Gastrocnemius medialis (tissue), 4 donors: ENCODE measurements at regions of chr22 and their contacts with region 1.

Region 1: DNA sequence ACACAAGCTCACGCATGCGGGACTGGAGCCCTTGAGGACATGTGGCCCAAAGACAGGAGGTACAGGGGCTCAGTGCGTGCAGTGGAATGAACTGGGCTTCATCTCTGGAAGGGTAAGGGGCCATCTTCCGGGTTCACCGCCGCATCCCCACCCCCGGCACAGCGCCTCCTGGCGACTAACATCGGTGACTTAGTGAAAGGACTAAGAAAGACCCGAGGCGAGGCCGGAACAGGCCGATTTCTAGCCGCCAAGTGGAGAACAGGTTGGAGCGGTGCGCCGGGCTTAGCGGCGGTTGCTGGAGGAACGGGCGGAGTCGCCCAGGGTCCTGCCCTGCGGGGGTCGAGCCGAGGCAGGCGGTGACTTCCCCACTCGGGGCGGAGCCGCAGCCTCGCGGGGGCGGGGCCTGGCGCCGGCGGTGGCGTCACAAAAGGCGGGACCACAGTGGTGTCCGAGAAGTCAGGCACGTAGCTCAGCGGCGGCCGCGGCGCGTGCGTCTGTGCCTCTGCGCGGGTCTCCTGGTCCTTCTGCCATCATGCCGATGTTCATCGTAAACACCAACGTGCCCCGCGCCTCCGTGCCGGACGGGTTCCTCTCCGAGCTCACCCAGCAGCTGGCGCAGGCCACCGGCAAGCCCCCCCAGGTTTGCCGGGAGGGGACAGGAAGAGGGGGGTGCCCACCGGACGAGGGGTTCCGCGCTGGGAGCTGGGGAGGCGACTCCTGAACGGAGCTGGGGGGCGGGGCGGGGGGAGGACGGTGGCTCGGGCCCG is at the start of gene MIF:
- DNase-seq: peak; percentile 78 to 89
- ATAC-seq: peak; percentile 90 to 91
- H3K4me3 ChIP-seq: peak within 1 kb of the TSS; percentile 67 to 94 (median 78)
- H3K27ac ChIP-seq: peak within 1 kb of the TSS; percentile 83 to 95 (median 88)
- H3K4me1 ChIP-seq: peaks cover 12 to 19% of the 10 kb centered on the region in 2 donors
- H3K27me3 ChIP-seq: no peaks in the 10 kb centered on the region
- CTCF ChIP-seq: peak; percentile 65 to 86 (median 76)
- POLR2A ChIP-seq: peak; percentile 88 to 89
- total RNA-seq, gene MIF: 78.1 to 145 (median 129) TPM

Region 2: GRCh38 chr22:23857606-23858483 is 36.3 kb before region 1 on chr22 and contains the start of gene SLC2A11:
- in situ Hi-C with region 1: no loop called
- intact Hi-C with region 1: loop called (anchors 5 kb)
- DNase-seq: peak; percentile 94 to 97
- ATAC-seq: peak; percentile 94 to 95
- H3K4me3 ChIP-seq: peak within 1 kb of the TSS; percentile 77 to 88 (median 86)
- H3K27ac ChIP-seq: peak within 1 kb of the TSS; percentile 94 to 99 (median 98)
- H3K4me1 ChIP-seq: peaks cover 18 to 23% of the 10 kb centered on the region in 2 donors
- H3K27me3 ChIP-seq: no peaks in the 10 kb centered on the region
- CTCF ChIP-seq: peak in 2 of 5 experiments; percentile 23 to 33
- POLR2A ChIP-seq: peak; percentile 70 to 87
- total RNA-seq, gene SLC2A11: 2.4 to 19.0 (median 6.2) TPM

Region 3: DNA sequence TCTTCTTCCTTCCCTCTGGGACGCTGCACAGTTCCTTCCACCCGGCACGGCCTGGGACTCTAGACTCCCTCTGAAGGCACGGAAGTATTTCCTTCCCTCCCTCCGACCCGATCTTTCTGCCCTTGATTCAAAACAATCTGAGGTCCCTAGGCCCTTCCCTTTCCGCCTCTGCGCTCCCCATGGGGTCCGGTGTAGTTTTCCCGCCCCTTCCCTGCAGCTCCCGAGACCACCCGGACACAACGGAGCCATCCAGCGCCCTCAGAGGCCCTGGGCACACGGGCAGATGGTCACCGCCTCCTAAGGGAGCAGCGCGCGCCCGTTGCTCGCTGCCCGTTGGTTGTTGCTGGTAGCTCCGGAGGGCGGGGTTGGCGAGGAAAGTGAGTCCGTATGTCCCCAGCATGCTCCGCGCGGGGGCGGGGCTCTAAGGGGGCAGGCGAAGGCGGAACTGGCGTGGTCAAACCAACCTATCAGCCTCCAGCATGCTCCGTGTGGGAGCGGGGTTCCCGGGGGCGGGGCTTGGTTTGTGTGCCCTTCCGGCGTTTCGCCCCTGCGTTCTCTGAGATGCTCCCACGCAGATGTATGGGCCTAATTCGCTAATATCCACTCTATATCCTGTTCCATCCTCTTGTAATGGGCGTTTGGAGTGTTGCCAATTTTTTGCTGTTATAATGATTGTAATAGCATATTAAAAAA is 19.7 kb after region 1 on chr22:
- in situ Hi-C with region 1: no loop called
- intact Hi-C with region 1: loop called (anchors 2 kb)
- DNase-seq: peak; percentile 98 to 100
- ATAC-seq: peak; percentile 98
- H3K4me3 ChIP-seq: peak overlapping the region; percentile 63 to 68 (median 66)
- H3K27ac ChIP-seq: peak overlapping the region; percentile 85 to 90 (median 88)
- H3K4me1 ChIP-seq: peaks cover 4 to 5% of the 10 kb centered on the region in 2 donors
- H3K27me3 ChIP-seq: no peaks in the 10 kb centered on the region
- CTCF ChIP-seq: no peak
- POLR2A ChIP-seq: peak; percentile 74 to 78

Region 4: DNA sequence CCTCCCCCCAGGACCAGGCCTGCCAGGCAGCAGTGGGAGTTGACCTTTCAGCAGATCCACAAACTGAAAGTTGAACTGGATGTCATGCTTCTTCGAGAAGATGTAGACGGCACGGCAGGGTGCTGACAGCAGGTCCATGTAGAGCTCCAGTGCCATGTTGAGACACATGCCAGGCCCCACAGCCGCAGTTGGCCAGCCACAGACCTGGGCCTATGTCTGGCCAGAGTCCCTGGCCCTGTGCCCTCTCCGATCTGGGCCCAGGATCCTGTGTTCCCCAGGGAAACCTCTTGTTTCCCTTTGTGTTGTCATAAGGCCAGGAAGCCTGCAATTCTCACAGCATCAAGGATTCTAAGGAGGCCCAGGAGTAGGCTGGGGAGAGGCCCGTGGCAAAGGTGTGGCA is 111.1 kb after region 1 on chr22 and contains the start of gene GSTT4:
- in situ Hi-C with region 1: no loop called
- intact Hi-C with region 1: no loop called
- DNase-seq: no peak
- ATAC-seq: no peak
- H3K4me3 ChIP-seq: no peak within 1 kb of the TSS
- H3K27ac ChIP-seq: peak within 1 kb of the TSS in 2 of 4 donors; percentile 5 to 31
- H3K4me1 ChIP-seq: peaks cover 0 to 4% of the 10 kb centered on the region in 2 donors
- H3K27me3 ChIP-seq: no peaks in the 10 kb centered on the region
- CTCF ChIP-seq: no peak
- POLR2A ChIP-seq: no peak
- total RNA-seq, gene GSTT4: not detected

Region 5: DNA sequence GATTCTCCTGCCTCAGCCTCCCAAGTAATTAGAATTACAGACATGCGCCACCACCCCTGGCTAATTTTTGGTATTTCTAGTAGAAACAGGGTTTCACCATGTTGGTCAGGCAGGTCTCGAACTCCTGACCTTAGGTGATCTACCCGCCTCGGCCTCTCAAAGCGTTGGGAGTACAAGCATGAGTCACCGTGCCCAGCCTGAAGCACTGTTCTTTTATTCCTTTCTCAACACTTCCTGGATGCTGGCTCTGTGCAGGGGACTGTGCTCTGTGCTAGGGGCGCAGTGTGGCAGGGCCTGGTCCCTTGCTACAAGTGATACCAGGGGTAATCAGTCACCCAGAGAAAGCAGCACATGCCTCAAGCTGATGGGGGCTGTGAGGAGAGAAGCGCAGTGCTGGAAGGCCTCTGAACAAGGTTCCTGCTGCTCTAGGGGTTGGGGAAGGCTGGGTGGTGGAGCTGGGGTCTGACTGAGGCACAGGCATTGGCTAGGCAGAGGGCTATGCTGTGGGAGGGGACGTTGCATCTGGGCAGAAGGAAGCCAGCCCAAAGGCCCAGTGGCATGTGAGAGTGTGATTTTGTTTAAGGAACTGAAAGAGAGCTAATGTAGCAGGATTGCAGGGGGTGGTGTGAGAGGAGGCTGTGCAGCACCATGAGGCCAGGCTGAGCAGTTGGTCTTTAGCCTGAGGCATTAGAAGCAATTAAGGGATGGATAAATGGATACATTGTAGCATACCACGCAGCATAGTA is 159.5 kb after region 1 on chr22:
- in situ Hi-C with region 1: no loop called
- intact Hi-C with region 1: no loop called
- DNase-seq: no peak
- ATAC-seq: no peak
- H3K4me3 ChIP-seq: no peak overlapping the region
- H3K27ac ChIP-seq: no peak overlapping the region
- H3K4me1 ChIP-seq: no peaks in the 10 kb centered on the region
- H3K27me3 ChIP-seq: no peaks in the 10 kb centered on the region
- CTCF ChIP-seq: no peak
- POLR2A ChIP-seq: no peak